ENCODE measurements at regions of chr18 and their contacts with region 1.

Region 1: DNA sequence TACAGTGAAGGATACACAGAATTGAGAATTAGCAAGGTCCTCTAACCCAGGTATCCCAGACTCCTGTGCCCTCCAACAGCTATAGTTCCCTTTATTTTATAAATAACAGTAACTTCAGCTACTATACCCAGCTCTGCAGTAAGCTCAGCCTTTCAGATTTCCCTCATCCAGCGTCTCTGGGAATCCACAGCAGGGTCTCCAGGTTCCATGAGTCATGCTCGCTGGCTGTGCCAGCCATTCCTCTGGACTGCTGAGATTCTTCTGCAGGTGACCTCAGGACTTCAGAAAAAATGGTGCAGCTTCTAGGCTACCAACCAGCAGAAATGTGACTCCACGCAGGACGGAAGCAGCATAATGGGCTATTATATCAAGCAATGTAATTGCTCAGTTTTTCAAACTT is 419.3 kb downstream of the ZNF516 start:
- DNase-seq: no peak
- ATAC-seq: no peak
- H3K4me3 ChIP-seq: no peak overlapping the region
- H3K27ac ChIP-seq: no peak overlapping the region
- H3K4me1 ChIP-seq: no peaks in the 10 kb centered on the region
- H3K27me3 ChIP-seq: peaks cover 0 to 4% (median 0%) of the 10 kb centered on the region in 7 donors
- CTCF ChIP-seq: no peak

Region 2: GRCh38 chr18:76131738-76132137 is 56.0 kb after region 1 on chr18:
- intact Hi-C with region 1: loop called in 1 of 10 experiments (anchors 10 kb)
- DNase-seq: no peak
- ATAC-seq: no peak
- H3K4me3 ChIP-seq: no peak overlapping the region
- H3K27ac ChIP-seq: no peak overlapping the region
- H3K4me1 ChIP-seq: no peaks in the 10 kb centered on the region
- H3K27me3 ChIP-seq: no peaks in the 10 kb centered on the region
- CTCF ChIP-seq: no peak

Region 3: DNA sequence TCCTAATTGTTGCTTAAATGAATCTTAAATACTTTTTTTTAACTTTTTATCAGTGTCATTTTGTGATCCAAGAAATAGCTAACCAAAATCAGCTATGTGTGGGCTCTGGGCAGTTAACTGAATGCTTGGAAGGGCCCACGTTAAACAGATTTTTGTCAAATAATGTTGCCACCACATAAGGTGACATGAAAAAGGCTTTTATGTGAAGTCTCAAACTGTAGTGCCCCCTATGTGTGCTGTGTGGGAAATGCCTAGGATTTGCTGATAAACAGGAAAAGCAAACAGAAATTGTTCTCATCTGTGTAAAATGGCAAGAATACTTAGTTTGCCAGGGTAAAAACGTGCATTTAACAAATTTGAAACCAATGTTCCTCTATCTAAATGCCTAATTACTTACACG is 177.1 kb after region 1 on chr18:
- intact Hi-C with region 1: no loop called
- DNase-seq: no peak
- ATAC-seq: no peak
- H3K4me3 ChIP-seq: no peak overlapping the region
- H3K27ac ChIP-seq: no peak overlapping the region
- H3K4me1 ChIP-seq: peaks cover 0 to 3% (median 0%) of the 10 kb centered on the region in 9 donors
- H3K27me3 ChIP-seq: peaks cover 0 to 20% (median 5%) of the 10 kb centered on the region in 7 donors
- CTCF ChIP-seq: peak in 7 of 9 donors; percentile 14 to 45 (median 41)

Region 4: GRCh38 chr18:76318607-76319006 is 242.8 kb after region 1 on chr18:
- intact Hi-C with region 1: no loop called
- DNase-seq: no peak
- ATAC-seq: no peak
- H3K4me3 ChIP-seq: no peak overlapping the region
- H3K27ac ChIP-seq: no peak overlapping the region
- H3K4me1 ChIP-seq: no peaks in the 10 kb centered on the region
- H3K27me3 ChIP-seq: peaks cover 0 to 3% (median 0%) of the 10 kb centered on the region in 7 donors
- CTCF ChIP-seq: no peak